Common myeloid progenitor, CD34-positive (primary cell): ENCODE measurements at regions of chr19 and their contacts with region 1.

Region 1: DNA sequence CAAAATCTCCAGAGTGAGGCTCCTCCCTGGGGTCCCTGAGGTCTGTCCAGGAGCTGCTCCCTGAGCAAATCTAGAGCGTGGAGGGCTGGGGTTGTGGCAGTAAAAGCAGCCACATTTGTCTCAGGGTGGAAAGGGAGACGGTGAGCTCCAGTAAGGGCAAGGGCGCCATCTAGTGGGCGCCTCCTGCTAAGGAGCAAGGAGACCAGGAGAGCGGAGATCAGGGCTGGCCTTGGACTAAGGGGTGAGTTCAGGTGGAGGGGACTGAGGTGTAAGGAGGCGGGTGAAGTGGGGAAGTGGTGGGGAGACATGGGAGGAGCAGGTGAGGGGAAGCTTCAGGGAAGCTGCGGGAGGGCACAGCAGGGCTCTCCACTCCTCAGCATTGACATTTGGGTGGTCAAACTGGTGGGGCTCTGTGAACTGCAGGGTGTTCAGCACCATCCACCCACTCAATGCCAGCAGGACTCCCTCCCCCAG is 5.3 kb upstream of the CEACAM21 start:
- DNase-seq: peak; percentile 83 to 91 (median 88)
- H3K4me3 ChIP-seq: no peak overlapping the region
- H3K27ac ChIP-seq: no peak overlapping the region
- H3K4me1 ChIP-seq: peaks cover under 1 to 22% (median 11%) of the 10 kb centered on the region in 4 experiments
- H3K27me3 ChIP-seq: no peaks in the 10 kb centered on the region

Region 2: GRCh38 chr19:41439441-41440222 is 131.0 kb before region 1 on chr19 and contains the start of gene DMAC2:
- CTCF ChIA-PET with region 1: interaction called, 113 read pairs
- POLR2A ChIA-PET with region 1: no interaction called
- DNase-seq: peak; percentile 97 to 98 (median 97)
- H3K4me3 ChIP-seq: peak within 1 kb of the TSS; percentile 71 to 100 (median 93)
- H3K27ac ChIP-seq: peak within 1 kb of the TSS; percentile 80 to 88
- H3K4me1 ChIP-seq: peaks cover 4 to 22% (median 13%) of the 10 kb centered on the region in 4 experiments
- H3K27me3 ChIP-seq: no peaks in the 10 kb centered on the region

Region 3: DNA sequence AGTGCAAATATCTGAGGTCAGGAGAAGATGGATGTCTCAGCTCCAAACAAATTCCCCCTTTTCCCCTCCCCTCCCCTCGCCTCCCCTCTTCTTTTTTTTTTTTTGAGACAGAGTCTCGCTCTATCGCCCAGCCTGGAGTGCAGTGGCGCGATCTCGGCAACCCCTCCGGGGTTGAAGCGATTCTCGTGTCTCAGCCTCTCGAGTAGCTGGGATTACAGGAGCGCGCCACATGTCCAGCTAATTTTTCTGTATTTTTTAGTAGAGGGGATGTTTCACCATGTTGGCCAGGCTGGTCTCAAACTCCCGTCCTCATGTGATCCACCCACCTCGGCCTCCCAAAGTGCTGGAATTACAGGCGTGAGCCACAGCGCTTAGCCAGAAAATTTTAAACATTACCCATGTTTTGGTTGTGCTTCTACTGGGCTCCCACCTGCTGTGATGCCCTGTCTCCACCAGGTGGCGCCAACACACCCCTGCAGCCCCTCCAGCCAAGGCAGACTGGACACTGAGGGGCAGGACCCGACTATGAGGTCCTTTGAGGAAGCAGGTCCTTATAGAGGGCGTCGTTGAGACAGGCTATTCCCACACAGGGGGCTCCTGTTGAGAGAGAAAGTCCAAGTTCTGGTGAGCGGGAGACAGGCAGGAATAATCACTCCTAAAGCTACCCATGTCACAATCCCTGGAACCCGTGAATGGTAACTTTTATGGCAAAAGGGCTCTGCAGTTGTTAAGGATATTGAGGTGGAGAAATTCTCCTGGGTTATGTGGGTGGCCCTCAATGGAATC is 121.4 kb before region 1 on chr19:
- CTCF ChIA-PET with region 1: interaction called, 113 read pairs
- POLR2A ChIA-PET with region 1: no interaction called
- DNase-seq: peak; percentile 50 to 68 (median 65)
- H3K4me3 ChIP-seq: peak overlapping the region in 6 of 7 experiments; percentile 13 to 66 (median 42)
- H3K27ac ChIP-seq: no peak overlapping the region
- H3K4me1 ChIP-seq: peaks cover 3 to 13% (median 5%) of the 10 kb centered on the region in 4 experiments
- H3K27me3 ChIP-seq: peaks cover 0 to 5% (median 0%) of the 10 kb centered on the region in 5 experiments

Region 4: GRCh38 chr19:41541990-41542584 is 28.6 kb before region 1 on chr19:
- CTCF ChIA-PET with region 1: interaction called, 110 read pairs
- POLR2A ChIA-PET with region 1: interaction called, 3 read pairs
- DNase-seq: peak; percentile 75 to 83 (median 82)
- H3K4me3 ChIP-seq: peak overlapping the region in 1 of 7 experiments; percentile 43
- H3K27ac ChIP-seq: no peak overlapping the region
- H3K4me1 ChIP-seq: peaks cover 12 to 47% (median 35%) of the 10 kb centered on the region in 4 experiments
- H3K27me3 ChIP-seq: no peaks in the 10 kb centered on the region

Region 5: DNA sequence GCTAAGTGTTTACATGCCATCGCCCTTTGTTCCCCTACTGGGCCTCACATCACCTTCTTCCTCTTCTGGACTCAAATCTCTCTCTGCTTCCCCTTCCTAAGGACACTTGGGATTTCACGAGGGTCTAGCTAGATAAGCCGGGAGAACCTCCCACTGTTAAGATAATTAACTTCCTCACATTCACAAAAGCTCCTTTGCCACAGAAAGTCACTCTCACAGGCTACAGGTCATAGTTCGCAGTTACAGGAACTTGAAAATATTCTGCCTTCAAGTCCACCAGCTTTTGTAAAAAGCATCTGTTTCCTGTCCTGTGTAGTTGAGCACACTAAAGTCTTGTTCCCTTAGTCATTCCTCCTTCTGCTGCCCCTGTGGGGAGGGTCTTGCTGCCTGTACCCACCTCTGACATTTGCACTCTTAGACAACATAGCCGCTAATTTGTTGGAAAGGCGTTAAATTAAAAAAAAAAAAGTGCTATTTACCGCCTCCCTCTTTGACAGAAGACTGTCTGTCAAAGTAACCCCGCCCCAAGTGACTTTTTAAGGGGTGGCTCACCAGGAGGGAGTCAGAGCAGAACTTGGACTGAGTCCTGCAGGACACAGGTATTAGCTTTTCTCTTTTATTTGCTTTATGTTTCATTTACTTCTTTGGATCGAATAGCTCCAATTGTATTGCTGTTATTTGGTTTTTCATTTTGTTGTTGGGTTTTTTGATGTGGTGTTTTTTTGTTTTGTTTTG is 21.6 kb before region 1 on chr19:
- CTCF ChIA-PET with region 1: interaction called, 110 read pairs
- POLR2A ChIA-PET with region 1: no interaction called
- DNase-seq: peak; percentile 86 to 99 (median 97)
- H3K4me3 ChIP-seq: peak overlapping the region in 6 of 7 experiments; percentile 67 to 91 (median 76)
- H3K27ac ChIP-seq: peak overlapping the region; percentile 68 to 82
- H3K4me1 ChIP-seq: peaks cover 49 to 88% (median 77%) of the 10 kb centered on the region in 4 experiments
- H3K27me3 ChIP-seq: no peaks in the 10 kb centered on the region

Region 6: DNA sequence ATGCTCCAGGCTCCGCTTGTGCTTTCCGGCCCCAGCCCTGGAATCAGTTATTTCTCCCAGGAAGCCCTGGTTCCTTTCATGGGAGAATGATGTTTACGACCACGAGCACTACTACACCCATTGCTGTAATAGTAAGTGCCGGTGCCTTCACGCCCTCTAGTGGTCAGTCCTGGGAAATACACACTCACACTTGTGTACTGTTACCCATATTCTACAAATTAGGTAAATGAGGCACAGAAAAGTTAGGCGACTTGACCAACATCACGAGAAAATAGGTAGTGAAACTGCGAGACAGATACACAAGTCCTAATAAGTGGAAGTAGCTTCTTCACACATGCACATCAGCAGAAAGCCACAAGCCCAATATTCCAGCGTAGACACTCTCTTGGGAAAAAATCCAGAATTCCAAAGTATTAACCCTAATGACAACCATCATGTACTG is 26.9 kb after region 1 on chr19:
- CTCF ChIA-PET with region 1: interaction called, 30 read pairs
- POLR2A ChIA-PET with region 1: no interaction called
- DNase-seq: peak; percentile 74 to 84 (median 79)
- H3K4me3 ChIP-seq: no peak overlapping the region
- H3K27ac ChIP-seq: no peak overlapping the region
- H3K4me1 ChIP-seq: peaks cover 0 to 4% (median 2%) of the 10 kb centered on the region in 4 experiments
- H3K27me3 ChIP-seq: peaks cover 0 to 4% (median 0%) of the 10 kb centered on the region in 5 experiments